MCF 10A (cell line): ENCODE measurements at regions of chr2 and their contacts with region 1.

Region 1: DNA sequence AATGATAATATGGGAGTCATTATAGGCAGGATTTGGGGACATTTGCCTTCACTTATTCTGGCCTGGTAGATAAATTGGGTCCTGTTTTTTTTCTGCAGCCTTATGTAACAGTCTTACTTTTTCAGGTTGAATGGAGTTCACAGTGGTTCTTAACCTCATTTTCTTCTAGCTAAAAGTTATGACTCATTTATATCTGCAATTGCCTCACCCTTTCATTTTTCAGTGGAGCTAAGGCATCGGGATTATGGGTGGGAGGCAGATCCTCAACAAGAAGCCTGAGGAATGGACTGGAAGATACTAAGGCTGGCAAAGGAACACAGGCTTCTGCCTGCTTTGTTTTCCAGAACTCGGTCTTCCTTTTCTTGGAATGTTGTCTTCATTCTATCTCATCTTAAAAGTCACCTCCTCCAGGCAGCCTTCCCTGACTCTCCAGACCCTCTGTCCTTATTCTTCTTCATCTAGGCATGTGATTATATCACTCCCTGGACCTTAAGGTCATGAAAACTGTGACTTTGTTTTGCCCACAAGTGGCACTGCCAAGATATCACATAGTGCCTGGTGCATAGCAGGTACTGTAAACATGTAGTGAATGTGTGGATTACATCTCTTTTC is 41.0 kb upstream of the ACSL3 start:
- DNase-seq: peak; percentile 52
- H3K4me3 Mint-ChIP-seq: no peak overlapping the region
- H3K27ac Mint-ChIP-seq: no peak overlapping the region
- H3K4me1 Mint-ChIP-seq: peaks cover 15% of the 10 kb centered on the region
- H3K27me3 Mint-ChIP-seq: no peaks in the 10 kb centered on the region
- CTCF ChIP-seq: no peak

Region 2: GRCh38 chr2:222805541-222806304 is 14.1 kb before region 1 on chr2:
- CTCF ChIA-PET with region 1: no interaction called
- POLR2A ChIA-PET with region 1: interaction called, 19 read pairs
- intact Hi-C with region 1: no loop called
- DNase-seq: peak; percentile 89
- H3K4me3 Mint-ChIP-seq: peak overlapping the region; percentile 39
- H3K27ac Mint-ChIP-seq: peak overlapping the region; percentile 96
- H3K4me1 Mint-ChIP-seq: peaks cover 10% of the 10 kb centered on the region
- H3K27me3 Mint-ChIP-seq: no peaks in the 10 kb centered on the region
- CTCF ChIP-seq: no peak